HAP-1 (cell line): ENCODE measurements at regions of chr1 and their contacts with region 1.

Region 1: GRCh38 chr1:26156704-26157038 is 2.2 kb upstream of the FAM110D start:
- DNase-seq: peak in 1 of 2 experiments; percentile 50
- H3K4me3 ChIP-seq: no peak overlapping the region
- H3K4me1 ChIP-seq: peaks cover 13% of the 10 kb centered on the region
- H3K27me3 ChIP-seq: no peaks in the 10 kb centered on the region

Region 2: GRCh38 chr1:26044971-26045721 is 111.5 kb before region 1 on chr1:
- in situ Hi-C with region 1: loop called (anchors 5 kb)
- DNase-seq: no peak
- H3K4me3 ChIP-seq: no peak overlapping the region
- H3K4me1 ChIP-seq: no peaks in the 10 kb centered on the region
- H3K27me3 ChIP-seq: peaks cover 43% of the 10 kb centered on the region